BJ (cell line): ENCODE measurements at regions of chr17 and their contacts with region 1.

Region 1: GRCh38 chr17:1186923-1187771 is 7.4 kb upstream of the ABR start:
- DNase-seq: peak; percentile 31
- H3K4me3 ChIP-seq: no peak overlapping the region
- H3K27me3 ChIP-seq: peaks cover 8% of the 10 kb centered on the region
- CTCF ChIP-seq: peak; percentile 100

Region 2: DNA sequence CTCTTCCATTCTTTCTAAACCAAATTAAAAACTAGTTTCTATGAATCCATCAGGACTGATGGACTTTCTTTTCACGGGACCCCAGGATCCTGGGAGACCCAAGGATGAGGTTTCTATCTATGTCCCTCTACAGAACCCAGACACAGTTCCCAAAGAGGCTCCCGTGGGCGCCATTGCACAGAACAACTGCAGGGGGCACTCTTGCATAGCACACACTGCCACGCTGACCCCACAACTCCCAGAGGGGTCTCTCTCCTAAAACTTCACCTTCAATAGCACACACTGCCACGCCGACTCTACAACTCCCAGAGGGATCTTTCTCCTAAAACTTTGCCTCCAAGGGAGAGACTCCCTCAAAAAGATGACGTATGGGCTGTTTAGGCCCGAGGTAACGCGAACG is 16.4 kb before region 1 on chr17:
- CTCF ChIA-PET with region 1: no interaction called
- POLR2A ChIA-PET with region 1: no interaction called
- DNase-seq: no peak
- H3K4me3 ChIP-seq: no peak overlapping the region
- H3K27me3 ChIP-seq: no peaks in the 10 kb centered on the region
- CTCF ChIP-seq: no peak

Region 3: GRCh38 chr17:1197781-1198490 is 10.8 kb after region 1 on chr17:
- CTCF ChIA-PET with region 1: interaction called, 19 read pairs
- POLR2A ChIA-PET with region 1: no interaction called
- DNase-seq: no peak
- H3K4me3 ChIP-seq: no peak overlapping the region
- H3K27me3 ChIP-seq: no peaks in the 10 kb centered on the region; the same call in 1 of the 2 replicates
- CTCF ChIP-seq: no peak

Region 4: DNA sequence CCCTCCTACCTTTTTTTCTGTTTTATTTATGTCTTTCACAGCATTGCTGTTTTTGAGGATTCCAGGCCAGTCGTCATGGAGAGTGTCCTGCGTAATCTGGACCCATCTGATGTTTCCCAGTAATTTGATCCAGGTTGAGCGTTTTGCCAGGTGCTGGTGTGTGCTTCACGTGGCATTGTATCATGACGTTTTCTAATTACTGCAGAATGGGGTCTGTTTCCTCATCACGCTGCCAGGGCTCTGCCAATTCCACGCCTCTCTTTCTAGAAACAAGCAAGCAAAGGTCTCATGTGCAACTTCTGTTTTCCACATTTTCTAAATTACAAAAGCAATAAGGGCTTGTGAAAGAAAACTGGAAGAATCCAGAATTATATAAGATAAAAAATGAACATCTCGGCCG is 54.8 kb after region 1 on chr17:
- CTCF ChIA-PET with region 1: no interaction called
- POLR2A ChIA-PET with region 1: no interaction called
- DNase-seq: peak; percentile 29
- H3K4me3 ChIP-seq: no peak overlapping the region
- H3K27me3 ChIP-seq: 0 out of 2 replicates have a peak, but pooled peaks cover 2% of the 10 kb centered on the region
- CTCF ChIP-seq: no peak

Region 5: DNA sequence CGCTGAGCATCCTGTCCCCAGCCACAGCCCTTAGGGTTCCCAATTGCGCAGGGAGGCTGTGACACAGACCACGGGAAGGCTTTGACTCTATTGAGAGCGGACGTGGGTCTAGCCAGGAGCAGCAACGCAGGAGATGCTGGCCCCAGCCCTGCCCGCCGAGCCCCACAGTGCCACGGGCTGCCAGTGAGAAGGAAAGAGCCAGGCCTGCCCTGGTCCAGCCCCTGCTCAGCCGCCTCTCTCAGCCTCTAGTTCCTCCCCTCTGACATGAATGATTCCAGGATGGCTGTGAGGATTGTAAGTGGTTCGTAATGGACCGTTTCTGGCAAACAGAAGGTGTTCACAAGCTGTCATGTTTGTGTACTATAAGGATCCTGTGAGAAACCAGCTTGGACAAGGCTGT is 85.6 kb after region 1 on chr17:
- CTCF ChIA-PET with region 1: no interaction called
- POLR2A ChIA-PET with region 1: no interaction called
- DNase-seq: no peak
- H3K4me3 ChIP-seq: no peak overlapping the region
- H3K27me3 ChIP-seq: peaks cover 7% of the 10 kb centered on the region
- CTCF ChIP-seq: no peak